HepG2 (cell line): ENCODE measurements at regions of chr2 and their contacts with region 1.

Region 1: DNA sequence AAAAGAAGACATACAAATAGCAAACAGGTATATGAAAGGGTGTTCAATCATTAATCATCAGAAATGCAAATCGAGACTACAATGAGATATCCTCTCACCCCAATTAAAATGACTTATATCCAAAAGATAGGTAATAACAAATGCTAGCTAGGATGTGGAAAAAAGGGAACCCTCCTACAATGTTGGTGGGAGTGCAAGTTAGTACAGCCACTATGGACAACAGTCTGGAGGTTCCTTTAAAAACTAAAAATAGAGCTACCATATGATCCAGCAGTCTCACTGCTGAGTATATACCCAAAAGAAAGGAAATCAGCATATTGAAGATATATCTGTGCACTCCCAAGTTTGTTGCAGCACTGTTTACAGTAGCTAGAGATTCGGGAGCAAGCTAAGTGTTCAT is 271.5 kb downstream of the MBD5 start:
- DNase-seq: no peak
- ATAC-seq: no peak
- H3K4me3 ChIP-seq: no peak overlapping the region
- H3K27ac ChIP-seq: no peak overlapping the region
- H3K4me1 ChIP-seq: no peaks in the 10 kb centered on the region
- H3K27me3 ChIP-seq: no peaks in the 10 kb centered on the region
- CTCF ChIP-seq: no peak
- EP300 ChIP-seq: no peak
- POLR2A ChIP-seq: no peak
- RAD21 ChIP-seq: no peak

Region 2: DNA sequence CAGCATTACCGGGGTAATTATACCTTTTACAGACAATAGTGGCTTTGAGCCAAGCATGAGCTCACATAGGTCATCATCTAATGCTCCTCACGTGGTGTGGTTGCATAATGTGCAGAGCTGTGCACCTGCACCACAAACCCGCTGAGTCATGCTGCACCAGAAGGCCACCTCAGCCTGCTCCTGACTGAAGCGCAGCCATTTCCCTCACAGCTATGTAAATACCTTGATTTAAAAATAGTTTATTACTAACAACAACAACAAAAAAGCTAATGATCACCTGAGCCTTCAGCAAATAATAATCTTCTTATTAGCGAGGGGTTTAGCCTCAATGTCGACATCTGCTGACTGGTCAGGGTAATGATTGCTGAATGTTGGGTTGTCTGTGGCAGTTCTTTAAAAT is 32.8 kb before region 1 on chr2:
- CTCF ChIA-PET with region 1: no interaction called
- POLR2A ChIA-PET with region 1: no interaction called
- in situ Hi-C with region 1: no loop called
- intact Hi-C with region 1: no loop called
- DNase-seq: no peak
- ATAC-seq: no peak
- H3K4me3 ChIP-seq: no peak overlapping the region
- H3K27ac ChIP-seq: no peak overlapping the region
- H3K4me1 ChIP-seq: no peaks in the 10 kb centered on the region
- H3K27me3 ChIP-seq: no peaks in the 10 kb centered on the region
- CTCF ChIP-seq: no peak
- EP300 ChIP-seq: no peak
- POLR2A ChIP-seq: no peak
- RAD21 ChIP-seq: no peak

Region 3: DNA sequence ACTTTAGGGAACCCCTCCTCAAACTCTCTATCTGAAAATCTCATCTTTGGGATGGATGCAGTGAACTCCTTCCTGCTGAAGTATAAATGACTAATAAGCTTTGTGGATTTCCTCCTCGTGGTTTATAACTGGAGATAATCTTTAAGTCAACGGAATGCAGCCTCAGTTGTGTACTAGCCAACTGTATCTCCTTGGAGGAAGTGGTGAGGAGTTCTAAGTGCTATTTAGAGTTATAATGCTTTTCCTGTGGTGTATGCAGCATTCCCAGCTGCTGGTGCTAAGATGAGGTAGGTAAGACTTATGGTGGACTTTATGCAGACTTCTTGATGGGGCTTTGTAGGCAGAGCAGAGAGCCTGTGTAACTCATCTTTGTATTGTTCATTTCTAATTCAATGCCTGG is 837.0 kb after region 1 on chr2:
- CTCF ChIA-PET with region 1: no interaction called
- POLR2A ChIA-PET with region 1: no interaction called
- in situ Hi-C with region 1: no loop called
- intact Hi-C with region 1: loop called (anchors 5 kb)
- DNase-seq: no peak
- ATAC-seq: no peak
- H3K4me3 ChIP-seq: no peak overlapping the region
- H3K27ac ChIP-seq: no peak overlapping the region
- H3K4me1 ChIP-seq: 0 out of 2 replicates have a peak, but pooled peaks cover 11% of the 10 kb centered on the region
- H3K27me3 ChIP-seq: 0 out of 5 replicates have a peak, but pooled peaks cover 0 to 1% of the 10 kb centered on the region in 2 experiments
- CTCF ChIP-seq: no peak
- EP300 ChIP-seq: no peak
- POLR2A ChIP-seq: no peak
- RAD21 ChIP-seq: no peak